Posterior vena cava (tissue), 2 donors: ENCODE measurements at regions of chr7 and their contacts with region 1.

Region 1: GRCh38 chr7:144903201-144903600 is 67.3 kb upstream of the TPK1 start:
- DNase-seq: no peak

Region 2: DNA sequence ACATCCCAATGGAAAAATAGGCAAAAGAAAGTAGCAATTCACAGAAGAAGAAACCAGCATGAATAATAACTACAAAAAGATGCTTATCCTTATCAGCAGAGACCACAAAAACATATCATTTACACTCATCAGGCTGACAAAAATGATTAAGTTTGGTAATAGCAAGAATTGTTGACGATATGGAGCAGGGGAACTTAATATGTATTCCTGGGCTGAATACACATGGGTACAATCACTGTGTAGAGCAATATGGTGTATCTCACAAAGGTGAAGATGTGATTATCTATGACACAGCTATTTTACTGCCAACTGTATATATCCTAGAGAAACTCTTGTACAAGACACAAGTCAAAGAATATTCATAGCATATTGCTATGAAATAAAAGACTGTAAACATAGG is 357.9 kb before region 1 on chr7:
- intact Hi-C with region 1: loop called in 1 of 2 experiments (anchors 5 kb)
- DNase-seq: no peak